GM23248 (cell line): ENCODE measurements at regions of chr10 and their contacts with region 1.

Region 1: DNA sequence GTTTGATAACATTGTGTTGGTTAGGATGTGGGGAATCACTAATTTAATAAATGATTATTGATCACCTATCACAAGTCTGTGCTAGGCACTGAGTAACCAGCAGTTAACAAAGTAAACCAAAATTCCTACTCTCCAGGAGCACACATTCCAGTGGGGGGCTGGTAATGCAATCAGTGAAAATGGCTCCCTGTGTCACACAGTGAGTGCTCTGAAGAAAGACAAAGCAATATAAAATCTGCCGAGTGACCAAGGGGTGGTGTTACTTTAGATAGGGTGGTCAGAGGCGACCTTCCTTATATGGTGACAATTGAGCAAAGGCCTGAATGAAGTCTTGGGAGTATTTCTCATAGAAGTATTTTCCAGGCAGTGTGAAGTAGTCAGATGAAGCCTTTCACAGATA is 13.6 kb upstream of the SMC3 start:
- DNase-seq: no peak
- H3K4me3 ChIP-seq: no peak overlapping the region
- H3K27ac ChIP-seq: no peak overlapping the region
- H3K4me1 ChIP-seq: no peaks in the 10 kb centered on the region
- H3K27me3 ChIP-seq: no peaks in the 10 kb centered on the region

Region 2: GRCh38 chr10:110324201-110324804 is 229.6 kb before region 1 on chr10:
- in situ Hi-C with region 1: loop called (anchors 5 kb)
- DNase-seq: peak; percentile 11
- H3K4me3 ChIP-seq: no peak overlapping the region
- H3K27ac ChIP-seq: peak overlapping the region; percentile 87
- H3K4me1 ChIP-seq: peaks cover 41% of the 10 kb centered on the region
- H3K27me3 ChIP-seq: no peaks in the 10 kb centered on the region

Region 3: DNA sequence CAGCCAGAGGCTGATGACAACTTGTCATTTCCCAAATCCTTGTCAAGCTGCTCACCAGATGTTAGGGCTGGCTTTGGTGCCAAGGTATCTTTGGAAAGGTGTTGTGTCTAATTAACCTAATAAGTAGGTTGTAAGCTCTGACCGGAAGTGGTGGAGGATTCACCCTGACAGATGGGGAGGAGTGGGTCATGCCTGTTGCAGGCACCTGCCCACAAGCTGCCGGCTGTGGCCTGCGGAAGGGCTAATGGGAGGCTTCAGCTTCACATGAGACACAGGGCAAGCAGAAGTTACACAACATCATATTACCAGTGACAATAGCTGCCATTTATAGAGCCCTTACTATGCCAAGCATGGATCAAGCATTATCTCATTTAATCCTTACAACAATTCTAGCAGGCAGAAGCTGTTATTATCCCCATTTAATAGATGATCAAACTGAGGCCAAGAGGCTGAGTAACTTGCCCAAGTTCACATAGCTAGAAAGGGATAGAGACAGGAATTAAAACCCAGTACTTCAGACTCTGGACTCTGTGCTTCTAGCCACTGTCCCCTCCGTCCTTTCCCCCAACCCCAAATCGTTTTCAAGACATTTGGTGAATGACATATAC is 119.3 kb before region 1 on chr10:
- in situ Hi-C with region 1: no loop called
- DNase-seq: no peak
- H3K4me3 ChIP-seq: no peak overlapping the region
- H3K27ac ChIP-seq: no peak overlapping the region
- H3K4me1 ChIP-seq: no peaks in the 10 kb centered on the region; the same call in 1 of the 2 replicates
- H3K27me3 ChIP-seq: no peaks in the 10 kb centered on the region

Region 4: GRCh38 chr10:110671788-110672579 is 118.1 kb after region 1 on chr10:
- in situ Hi-C with region 1: no loop called
- DNase-seq: peak; percentile 89
- H3K4me3 ChIP-seq: peak overlapping the region; percentile 88
- H3K27ac ChIP-seq: no peak overlapping the region
- H3K4me1 ChIP-seq: peaks cover 14% of the 10 kb centered on the region
- H3K27me3 ChIP-seq: 0 out of 2 replicates have a peak, but pooled peaks cover 9% of the 10 kb centered on the region